ENCODE measurements at regions of chr1 and their contacts with region 1.

Region 1: GRCh38 chr1:23184212-23184934 is 15.7 kb upstream of the LUZP1 start:
- DNase-seq: no peak
- H3K4me3 ChIP-seq: peak overlapping the region; percentile 41
- CTCF ChIP-seq: peak; percentile 45

Region 2: DNA sequence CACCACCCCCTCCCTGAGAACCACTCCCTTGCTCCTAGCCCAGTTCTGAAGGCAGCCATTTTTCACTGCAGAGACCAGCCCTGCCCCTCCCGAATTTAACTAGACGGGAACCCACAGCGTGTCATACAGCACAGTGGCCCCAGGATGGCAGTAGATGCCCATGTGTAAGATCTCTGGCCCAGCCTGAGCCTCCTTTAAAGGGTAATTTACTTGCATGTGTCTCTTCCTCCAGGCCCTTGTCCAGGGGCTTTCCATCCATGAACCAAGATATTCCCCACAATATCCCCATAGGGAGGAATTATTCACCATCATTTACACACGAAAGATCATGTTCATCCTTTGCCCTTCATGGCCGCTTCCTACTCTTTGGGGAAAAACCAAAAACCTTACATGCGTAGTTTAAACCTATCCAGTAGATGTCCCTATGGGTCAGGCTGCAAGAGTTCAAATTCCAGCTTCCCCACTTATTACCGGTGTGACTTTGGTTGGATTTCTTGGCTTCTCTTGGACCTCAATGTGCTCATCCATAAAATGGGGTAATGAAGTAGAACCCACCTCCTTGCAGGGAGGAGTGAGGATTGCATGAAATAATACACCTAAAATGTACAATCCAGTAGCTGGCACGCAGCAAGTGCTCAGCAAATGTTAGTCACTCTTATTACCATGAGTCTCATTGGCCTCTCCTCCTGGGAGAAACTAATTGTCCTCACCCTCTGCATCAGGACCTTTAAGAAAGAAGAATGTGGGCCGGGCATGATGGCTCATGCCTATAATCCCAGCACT is 207.7 kb before region 1 on chr1:
- CTCF ChIA-PET with region 1: interaction called, 143 read pairs
- POLR2A ChIA-PET with region 1: interaction called, 3 read pairs
- DNase-seq: peak; percentile 44
- H3K4me3 ChIP-seq: no peak overlapping the region
- CTCF ChIP-seq: peak; percentile 85

Region 3: GRCh38 chr1:23090056-23090455 is 94.3 kb before region 1 on chr1:
- CTCF ChIA-PET with region 1: interaction called, 579 read pairs
- POLR2A ChIA-PET with region 1: no interaction called
- DNase-seq: no peak
- H3K4me3 ChIP-seq: no peak overlapping the region
- CTCF ChIP-seq: no peak

Region 4: DNA sequence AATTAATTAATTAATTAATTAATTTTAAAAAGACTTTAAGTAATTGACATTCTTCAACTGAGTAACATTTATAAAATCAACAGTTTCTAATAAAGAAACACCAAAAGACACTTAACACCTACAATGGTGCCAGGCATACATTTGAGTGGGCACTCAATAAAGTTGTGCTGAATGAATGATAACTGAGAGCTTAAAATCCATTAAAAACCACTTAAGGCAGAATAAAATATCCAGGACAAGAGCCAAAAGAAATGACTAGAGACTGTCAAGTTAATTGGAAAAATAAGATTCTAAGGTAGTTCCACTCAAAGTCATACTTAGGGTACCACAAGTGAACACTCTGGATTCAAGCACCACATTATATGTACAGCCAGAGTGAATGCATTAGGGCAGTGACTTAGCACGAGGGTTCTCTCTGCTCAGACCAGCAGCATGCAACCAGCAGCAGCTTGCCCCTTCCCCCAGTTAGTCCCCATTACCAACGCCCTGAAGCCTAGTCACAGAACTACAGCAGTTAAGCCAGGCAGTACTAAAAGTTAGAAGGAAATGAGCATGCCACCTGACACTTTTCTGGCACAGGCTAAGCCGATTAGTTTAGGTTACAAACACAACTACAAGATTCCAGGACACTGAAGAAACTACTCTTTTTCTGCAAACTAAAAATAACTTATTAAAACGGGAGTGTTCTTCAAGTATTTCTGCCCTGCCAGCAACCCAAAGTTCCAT is 62.2 kb before region 1 on chr1:
- CTCF ChIA-PET with region 1: interaction called, 13 read pairs
- POLR2A ChIA-PET with region 1: no interaction called
- DNase-seq: no peak
- H3K4me3 ChIP-seq: no peak overlapping the region
- CTCF ChIP-seq: no peak

Region 5: GRCh38 chr1:23168457-23169194 is 15.7 kb before region 1 on chr1 and contains the start of gene LUZP1:
- CTCF ChIA-PET with region 1: interaction called, 161 read pairs
- POLR2A ChIA-PET with region 1: no interaction called
- DNase-seq: no peak
- H3K4me3 ChIP-seq: peak within 1 kb of the TSS; percentile 85
- CTCF ChIP-seq: peak; percentile 7

Region 6: DNA sequence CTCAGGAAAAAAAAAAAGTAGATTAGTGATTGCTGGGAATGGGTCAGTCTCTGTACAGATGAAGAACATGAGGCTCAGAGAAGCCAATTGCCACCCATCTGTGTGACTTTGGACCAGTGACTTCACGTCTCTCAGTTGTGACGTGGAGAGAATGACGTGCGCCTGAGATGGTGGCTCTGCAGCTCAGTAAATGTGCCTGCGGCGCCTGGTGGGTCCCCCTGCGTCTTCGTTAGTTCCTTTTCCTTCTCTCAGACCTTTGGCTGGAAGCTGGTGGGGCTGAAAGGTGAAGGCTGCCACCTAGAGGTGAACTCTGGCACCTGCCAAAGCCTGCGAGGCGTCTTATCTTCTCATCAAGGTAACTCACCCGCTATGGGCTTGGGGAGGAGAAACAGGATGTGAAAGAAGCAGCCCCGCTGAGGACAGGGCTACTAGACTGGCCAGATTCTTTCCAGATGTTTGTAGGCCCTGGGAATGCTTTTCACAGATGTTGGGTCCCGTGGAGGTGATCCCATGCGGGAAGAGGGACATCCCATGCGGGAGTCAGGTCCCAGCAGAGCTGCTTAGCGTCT is 355.4 kb after region 1 on chr1:
- CTCF ChIA-PET with region 1: interaction called, 10 read pairs
- POLR2A ChIA-PET with region 1: no interaction called
- DNase-seq: no peak
- H3K4me3 ChIP-seq: peak overlapping the region; percentile 33
- CTCF ChIP-seq: peak; percentile 93